ENCODE measurements at regions of chr11 and their contacts with region 1.

Region 1: DNA sequence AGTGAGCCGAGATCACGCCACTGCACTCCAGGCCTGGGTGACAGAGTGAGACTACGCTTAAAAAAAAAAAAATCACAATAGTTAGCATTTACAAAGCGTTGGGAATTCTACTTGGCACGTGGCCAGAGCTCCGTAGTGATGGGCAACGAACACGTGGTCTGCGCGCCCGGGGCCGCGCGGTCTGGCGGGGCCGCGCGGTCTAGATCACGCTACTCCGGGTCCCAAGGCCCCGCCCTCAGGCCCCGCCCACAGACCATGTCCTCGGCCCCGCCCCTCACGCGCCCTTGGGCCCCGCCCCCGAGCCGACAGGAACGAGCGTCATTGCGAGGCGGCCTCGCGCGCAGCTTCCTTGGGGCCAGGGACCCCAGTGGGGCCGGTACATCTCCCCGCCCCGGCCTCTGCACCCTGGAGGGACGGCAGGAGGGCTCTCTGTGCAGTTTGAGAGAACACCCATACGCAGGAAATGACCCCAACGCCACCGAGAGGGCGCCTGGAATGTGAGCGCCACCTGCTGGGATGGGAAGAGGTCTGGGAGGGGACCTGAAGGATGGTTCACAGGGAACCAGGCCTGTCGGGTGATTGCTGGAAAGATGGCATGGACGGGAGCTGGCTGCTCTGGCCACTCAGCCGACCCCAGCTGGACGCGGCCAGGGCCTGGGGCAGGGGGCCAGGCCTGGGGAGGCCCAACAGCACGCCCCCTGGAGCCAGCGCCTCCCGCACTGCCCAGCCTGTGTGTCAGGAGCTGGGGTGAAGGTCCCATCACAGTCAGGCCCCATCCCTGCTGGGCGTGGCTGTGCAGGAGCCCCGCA is 2.0 kb upstream of the PTDSS2 start:
- DNase-seq: peak; percentile 97
- ATAC-seq: peak; percentile 85 to 89

Region 2: GRCh38 chr11:416757-417621 is 31.1 kb before region 1 on chr11:
- intact Hi-C with region 1: loop called in 1 of 2 experiments (anchors 2 kb)
- DNase-seq: peak; percentile 69
- ATAC-seq: peak; percentile 68 to 69

Region 3: DNA sequence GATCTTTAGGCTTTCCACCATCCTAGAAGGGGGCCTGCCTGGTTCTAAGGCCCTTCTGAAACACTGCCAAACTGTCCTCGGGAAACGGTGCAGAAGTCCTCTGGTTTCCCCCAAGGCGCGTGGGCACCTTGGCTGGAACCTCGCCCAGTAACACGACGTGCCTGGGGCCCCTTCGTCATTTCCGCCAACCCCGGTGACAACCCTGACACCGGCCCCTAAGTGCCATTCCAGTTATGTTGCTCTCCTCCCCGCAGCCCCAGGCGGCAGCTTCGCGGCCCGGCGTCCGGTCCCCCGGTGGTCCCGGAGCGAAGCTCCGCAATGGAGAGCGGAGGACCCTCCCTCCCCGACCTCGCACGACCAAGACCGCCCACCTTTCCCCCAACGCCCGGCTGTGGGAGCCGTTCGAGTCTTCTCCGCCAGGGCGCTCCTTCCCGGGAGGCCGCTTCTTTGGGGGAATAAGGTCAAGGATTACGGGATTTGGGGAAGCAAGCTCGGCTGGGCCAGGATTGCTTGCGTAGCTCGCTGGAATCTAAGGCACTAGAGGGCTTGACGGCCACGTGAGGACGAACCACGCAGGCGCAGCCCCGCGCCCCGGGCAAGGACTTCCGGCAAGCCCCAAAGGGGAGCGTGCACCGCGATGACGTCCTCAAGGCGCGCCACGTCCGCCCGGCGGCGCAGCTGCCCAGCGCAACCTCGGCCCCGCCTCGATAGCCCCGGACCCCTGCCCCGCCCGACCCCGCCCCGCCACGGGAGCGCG is 58.3 kb after region 1 on chr11:
- intact Hi-C with region 1: loop called in 1 of 2 experiments (anchors 1 kb)
- DNase-seq: peak; percentile 99
- ATAC-seq: peak; percentile 86 to 87